ENCODE measurements at regions of chr12 and their contacts with region 1.

Region 1: DNA sequence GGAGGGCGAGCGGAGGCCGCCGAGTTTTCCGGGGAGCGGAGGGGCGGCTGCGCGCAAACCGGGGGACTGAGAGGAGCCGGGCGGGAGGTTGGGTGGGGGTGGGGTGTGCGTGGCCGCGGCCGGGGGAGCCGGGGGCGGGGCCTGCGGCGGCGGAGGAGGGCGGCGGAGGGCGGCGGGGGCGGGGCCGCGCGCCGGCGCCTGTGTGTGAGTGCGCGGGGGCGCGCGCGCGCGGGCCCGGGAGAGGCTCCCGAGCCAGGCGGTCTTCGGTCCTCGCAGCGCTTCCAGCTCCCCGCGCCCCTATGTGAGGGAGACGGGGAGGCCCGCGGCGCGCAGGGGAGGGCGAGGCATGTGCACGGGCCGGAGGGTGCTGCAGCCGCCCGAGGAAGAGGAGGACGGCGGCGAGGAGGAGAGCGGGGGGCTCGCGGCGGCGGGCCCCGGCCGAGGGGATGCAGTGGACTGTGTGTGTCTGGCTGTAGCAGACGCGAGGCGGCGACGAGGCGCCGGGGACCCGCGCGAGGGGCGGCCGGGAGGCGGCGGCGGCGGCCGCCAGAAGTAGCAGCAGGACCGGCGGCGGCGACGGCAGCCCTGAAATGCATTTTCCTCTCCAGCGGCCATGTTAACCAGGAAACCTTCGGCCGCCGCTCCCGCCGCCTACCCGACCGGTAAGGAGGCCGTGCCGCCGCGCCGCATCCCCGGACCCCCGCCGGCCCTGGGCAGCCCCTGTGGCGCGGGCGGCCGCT is at the start of gene DYRK2:
- DNase-seq: peak; percentile 71 to 87 (median 82)
- H3K4me3 ChIP-seq: peak within 1 kb of the TSS; percentile 82 to 96 (median 88)
- H3K27ac ChIP-seq: peak within 1 kb of the TSS; percentile 61 to 82
- H3K4me1 ChIP-seq: peaks cover 4 to 33% (median 28%) of the 10 kb centered on the region in 4 experiments
- H3K27me3 ChIP-seq: no peaks in the 10 kb centered on the region

Region 2: DNA sequence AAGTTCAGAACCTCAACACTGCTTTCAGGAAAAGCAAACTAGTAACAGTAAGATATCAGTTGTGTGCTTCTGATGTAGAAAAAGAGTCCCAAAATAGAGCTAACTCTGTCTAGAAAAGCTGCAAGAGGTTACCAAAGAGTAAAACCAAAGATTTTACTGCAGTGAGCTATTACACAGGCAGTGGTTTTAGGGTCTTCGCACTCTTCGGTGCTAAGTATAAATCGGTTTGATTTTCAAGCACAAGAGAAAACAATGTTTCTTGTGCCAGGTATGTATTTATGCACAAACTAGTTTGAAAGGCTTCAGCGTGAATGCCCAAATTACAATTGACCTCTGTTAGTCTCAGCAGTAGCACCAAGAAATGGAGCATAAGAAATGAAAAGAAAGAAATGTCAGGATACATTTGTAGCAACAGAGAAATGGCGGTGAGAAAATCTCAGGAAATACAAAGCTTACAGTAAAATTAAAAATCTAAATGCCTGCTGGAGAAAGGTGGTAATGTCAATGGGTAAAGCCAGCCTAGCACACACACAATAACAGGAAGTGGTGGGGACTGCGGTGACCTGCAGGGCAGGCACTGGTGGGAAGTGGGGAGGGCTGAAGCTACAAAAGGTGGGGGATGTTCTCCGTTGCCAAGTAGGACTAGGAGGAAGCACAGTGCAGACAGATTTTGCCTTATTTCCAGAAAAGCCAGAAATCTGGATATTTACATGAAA is 18.2 kb before region 1 on chr12:
- CTCF ChIA-PET with region 1: interaction called, 11 read pairs
- POLR2A ChIA-PET with region 1: interaction called, 3 read pairs
- DNase-seq: peak; percentile 94 to 98 (median 98)
- H3K4me3 ChIP-seq: peak overlapping the region in 3 of 7 experiments; percentile 15 to 40 (median 21)
- H3K27ac ChIP-seq: no peak overlapping the region
- H3K4me1 ChIP-seq: peaks cover 13 to 56% (median 30%) of the 10 kb centered on the region in 4 experiments
- H3K27me3 ChIP-seq: no peaks in the 10 kb centered on the region